GM12878 (cell line): ENCODE measurements at regions of chr11 and their contacts with region 1.

Region 1: GRCh38 chr11:33736148-33736809 is at the start of gene CD59:
- DNase-seq: peak; percentile 54
- ATAC-seq: peak; percentile 77
- H3K4me3 ChIP-seq: peak within 1 kb of the TSS; percentile 83
- H3K27ac ChIP-seq: peak within 1 kb of the TSS; percentile 77
- H3K4me1 ChIP-seq: peaks cover 16% of the 10 kb centered on the region
- H3K27me3 ChIP-seq: no peaks in the 10 kb centered on the region
- CTCF ChIP-seq: no peak
- EP300 ChIP-seq: no peak; a peak in 1 of 4 replicates
- POLR2A ChIP-seq: peak; percentile 86
- RAD21 ChIP-seq: no peak
- polyA plus RNA-seq, gene CD59: 223 to 256 TPM

Region 2: DNA sequence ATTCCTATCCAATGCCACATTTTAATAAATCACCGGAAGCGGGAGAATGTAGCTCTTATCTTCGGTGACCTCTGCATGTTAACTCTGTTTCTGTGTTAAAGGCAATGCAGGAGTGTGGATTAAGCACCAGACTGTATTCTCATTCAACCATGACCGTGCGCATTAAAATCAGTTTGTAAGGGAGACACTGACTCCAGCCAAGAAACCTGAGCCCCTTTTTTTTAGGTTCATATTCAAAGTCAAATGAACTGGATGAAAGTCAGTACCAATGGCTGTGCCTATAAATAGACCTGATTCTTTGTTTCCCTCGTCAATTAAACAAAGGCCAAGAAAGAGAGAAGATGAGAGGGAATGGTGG is 67.8 kb before region 1 on chr11:
- CTCF ChIA-PET with region 1: no interaction called
- POLR2A ChIA-PET with region 1: no interaction called
- RAD21 ChIA-PET with region 1: no interaction called
- SMC1A ChIA-PET with region 1: no interaction called
- in situ Hi-C with region 1: no loop called
- intact Hi-C with region 1: no loop called
- DNase-seq: no peak
- ATAC-seq: no peak
- H3K4me3 ChIP-seq: no peak overlapping the region
- H3K27ac ChIP-seq: no peak overlapping the region
- H3K4me1 ChIP-seq: peaks cover 4% of the 10 kb centered on the region
- H3K27me3 ChIP-seq: no peaks in the 10 kb centered on the region
- CTCF ChIP-seq: no peak
- EP300 ChIP-seq: no peak
- POLR2A ChIP-seq: no peak
- RAD21 ChIP-seq: no peak

Region 3: GRCh38 chr11:33700425-33701271 is 35.6 kb before region 1 on chr11 and contains the start of gene C11orf91:
- CTCF ChIA-PET with region 1: interaction called, 3 read pairs
- POLR2A ChIA-PET with region 1: interaction called, 3 read pairs
- RAD21 ChIA-PET with region 1: no interaction called
- SMC1A ChIA-PET with region 1: interaction called, 4 read pairs
- in situ Hi-C with region 1: no loop called
- intact Hi-C with region 1: loop called (anchors 5 kb)
- DNase-seq: peak; percentile 59
- ATAC-seq: peak; percentile 98
- H3K4me3 ChIP-seq: peak within 1 kb of the TSS; percentile 71
- H3K27ac ChIP-seq: no peak within 1 kb of the TSS
- H3K4me1 ChIP-seq: peaks cover 3% of the 10 kb centered on the region; the same call in 1 of the 2 replicates
- H3K27me3 ChIP-seq: no peaks in the 10 kb centered on the region
- CTCF ChIP-seq: no peak
- EP300 ChIP-seq: no peak
- POLR2A ChIP-seq: no peak; the same call in none of the 2 replicates
- RAD21 ChIP-seq: no peak
- polyA plus RNA-seq, gene C11orf91: not detected

Region 4: DNA sequence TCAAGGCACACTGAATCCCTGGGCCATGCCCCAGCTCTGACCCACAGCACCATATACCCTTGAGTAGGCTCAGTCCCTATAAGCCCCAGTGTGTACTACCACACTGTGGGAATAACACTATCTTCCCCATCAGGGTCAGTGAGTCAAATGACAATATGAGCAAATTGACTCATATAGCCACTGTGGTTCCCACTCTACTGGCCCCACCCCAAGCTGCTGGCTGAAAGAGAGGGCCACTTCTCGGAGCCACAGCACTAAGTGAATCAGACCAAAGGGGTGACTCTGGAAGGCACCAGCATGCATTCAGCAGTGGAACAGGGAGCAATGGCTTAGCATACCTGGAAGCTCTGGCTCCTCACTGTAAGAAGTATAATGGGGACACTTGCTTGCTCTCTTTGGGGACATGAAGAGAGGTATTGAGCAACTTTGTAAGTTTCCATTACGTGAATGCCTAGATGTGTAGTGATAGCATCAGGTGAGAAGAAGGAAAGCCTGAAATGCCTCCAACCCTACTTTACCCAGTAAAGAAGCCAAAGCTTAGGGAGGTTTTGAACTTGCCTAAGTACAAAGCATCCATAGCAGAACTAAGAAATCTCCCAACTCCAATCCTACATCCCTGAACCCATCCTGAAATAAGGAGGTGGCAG is 13.6 kb before region 1 on chr11:
- CTCF ChIA-PET with region 1: interaction called, 276 read pairs
- POLR2A ChIA-PET with region 1: interaction called, 7 read pairs
- RAD21 ChIA-PET with region 1: interaction called, 158 read pairs
- SMC1A ChIA-PET with region 1: interaction called, 153 read pairs
- in situ Hi-C with region 1: no loop called
- intact Hi-C with region 1: no loop called
- DNase-seq: peak; percentile 34
- ATAC-seq: peak; percentile 90
- H3K4me3 ChIP-seq: no peak overlapping the region
- H3K27ac ChIP-seq: peak overlapping the region; percentile 62
- H3K4me1 ChIP-seq: peaks cover 24% of the 10 kb centered on the region
- H3K27me3 ChIP-seq: no peaks in the 10 kb centered on the region
- CTCF ChIP-seq: no peak
- EP300 ChIP-seq: no peak
- POLR2A ChIP-seq: no peak; the same call in 1 of the 2 replicates
- RAD21 ChIP-seq: no peak